ENCODE measurements at regions of chr1 and their contacts with region 1.

Region 1: DNA sequence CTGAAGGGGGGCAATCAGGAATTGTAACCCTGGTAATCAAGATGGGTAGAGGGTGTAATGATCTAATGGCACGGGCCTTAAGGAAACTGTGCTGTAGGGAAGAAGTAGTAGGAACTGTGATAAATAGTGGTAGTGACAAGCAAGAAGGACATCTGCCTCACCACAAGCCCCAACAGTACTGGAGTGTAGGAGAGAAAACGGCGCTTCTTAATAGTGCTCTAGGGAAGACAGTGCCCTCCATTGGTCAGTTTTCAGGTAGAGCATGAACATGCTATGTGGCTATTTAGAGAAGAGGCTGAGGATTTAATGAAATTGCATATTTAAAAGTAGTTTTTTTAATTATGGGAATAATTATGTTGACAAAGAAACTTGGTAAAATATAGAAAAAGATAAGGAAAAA is 32.2 kb downstream of the SLC30A7 start:
- DNase-seq: peak in 4 of 14 experiments; percentile 36 to 64 (median 53)
- ATAC-seq: no peak
- H3K4me3 ChIP-seq: peak overlapping the region; percentile 28
- H3K4me3 Mint-ChIP-seq: no peak overlapping the region
- H3K27ac ChIP-seq: peak overlapping the region; percentile 72 to 77
- H3K27ac Mint-ChIP-seq: no peak overlapping the region
- H3K4me1 ChIP-seq: peaks cover 46% of the 10 kb centered on the region
- H3K4me1 Mint-ChIP-seq: peaks cover 41% of the 10 kb centered on the region
- H3K27me3 ChIP-seq: no peaks in the 10 kb centered on the region
- H3K27me3 Mint-ChIP-seq: no peaks in the 10 kb centered on the region
- CTCF ChIP-seq: no peak

Region 2: GRCh38 chr1:100941098-100941527 is 13.0 kb after region 1 on chr1:
- CTCF ChIA-PET with region 1: interaction called, 3 read pairs
- POLR2A ChIA-PET with region 1: interaction called, 34 read pairs
- intact Hi-C with region 1: no loop called
- DNase-seq: no peak
- ATAC-seq: no peak
- H3K4me3 ChIP-seq: no peak overlapping the region
- H3K4me3 Mint-ChIP-seq: no peak overlapping the region
- H3K27ac ChIP-seq: no peak overlapping the region
- H3K27ac Mint-ChIP-seq: peak overlapping the region; percentile 90
- H3K4me1 ChIP-seq: peaks cover 11% of the 10 kb centered on the region
- H3K4me1 Mint-ChIP-seq: peaks cover 66% of the 10 kb centered on the region
- H3K27me3 ChIP-seq: no peaks in the 10 kb centered on the region
- H3K27me3 Mint-ChIP-seq: no peaks in the 10 kb centered on the region
- CTCF ChIP-seq: no peak

Region 3: DNA sequence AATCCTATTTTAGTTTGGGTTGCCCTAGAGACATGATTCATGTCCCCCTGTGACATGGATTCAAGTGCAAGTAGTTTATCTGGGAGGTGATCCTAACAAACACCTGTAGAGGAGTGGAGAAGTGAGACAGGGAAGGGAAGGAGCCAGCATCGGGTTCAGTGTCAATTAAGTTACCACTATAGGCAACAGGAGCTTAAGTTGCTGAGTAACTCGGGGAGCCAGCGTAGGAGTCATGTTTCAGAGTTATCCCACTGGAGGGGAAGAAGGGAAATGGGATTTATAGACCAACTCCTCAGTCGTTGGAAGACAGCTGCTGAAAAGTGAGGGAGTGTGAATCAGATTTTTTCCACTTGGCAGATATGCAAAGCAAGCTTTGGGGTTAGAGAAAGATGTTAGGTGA is 22.7 kb after region 1 on chr1:
- CTCF ChIA-PET with region 1: interaction called, 3 read pairs
- POLR2A ChIA-PET with region 1: interaction called, 50 read pairs
- intact Hi-C with region 1: loop called in 1 of 2 experiments (anchors 1 kb)
- DNase-seq: no peak
- ATAC-seq: no peak
- H3K4me3 ChIP-seq: no peak overlapping the region
- H3K4me3 Mint-ChIP-seq: no peak overlapping the region
- H3K27ac ChIP-seq: no peak overlapping the region
- H3K27ac Mint-ChIP-seq: peak overlapping the region; percentile 96
- H3K4me1 ChIP-seq: peaks cover 27% of the 10 kb centered on the region
- H3K4me1 Mint-ChIP-seq: peaks cover 81% of the 10 kb centered on the region
- H3K27me3 ChIP-seq: no peaks in the 10 kb centered on the region
- H3K27me3 Mint-ChIP-seq: no peaks in the 10 kb centered on the region
- CTCF ChIP-seq: no peak

Region 4: DNA sequence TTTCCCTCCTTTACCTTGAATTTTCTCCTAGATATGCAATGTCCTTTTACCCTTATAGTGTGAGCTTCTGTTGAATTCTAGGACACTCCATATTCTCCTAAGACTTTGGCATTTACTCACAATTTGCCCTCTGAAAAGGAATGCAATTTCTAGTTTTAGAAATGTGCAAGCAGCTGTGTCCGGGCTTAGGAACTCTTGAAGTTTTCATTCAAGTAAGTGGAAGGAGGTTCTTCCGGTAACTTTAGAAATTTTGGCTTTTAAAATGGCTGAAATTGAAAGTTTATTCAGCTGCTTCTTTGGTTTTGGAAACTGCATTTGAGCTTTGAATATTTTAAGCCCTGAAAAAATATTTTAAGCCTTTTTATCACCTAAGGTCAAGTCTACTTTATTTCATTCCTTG is 41.2 kb after region 1 on chr1:
- CTCF ChIA-PET with region 1: no interaction called
- POLR2A ChIA-PET with region 1: interaction called, 6 read pairs
- intact Hi-C with region 1: loop called in 1 of 2 experiments (anchors 5 kb)
- DNase-seq: no peak
- ATAC-seq: no peak
- H3K4me3 ChIP-seq: no peak overlapping the region
- H3K4me3 Mint-ChIP-seq: no peak overlapping the region
- H3K27ac ChIP-seq: no peak overlapping the region
- H3K27ac Mint-ChIP-seq: peak overlapping the region; percentile 39
- H3K4me1 ChIP-seq: no peaks in the 10 kb centered on the region
- H3K4me1 Mint-ChIP-seq: peaks cover 53% of the 10 kb centered on the region
- H3K27me3 ChIP-seq: no peaks in the 10 kb centered on the region
- H3K27me3 Mint-ChIP-seq: no peaks in the 10 kb centered on the region
- CTCF ChIP-seq: no peak

Region 5: GRCh38 chr1:100995198-100995988 is 67.3 kb after region 1 on chr1:
- CTCF ChIA-PET with region 1: no interaction called
- POLR2A ChIA-PET with region 1: interaction called, 5 read pairs
- intact Hi-C with region 1: loop called in 1 of 2 experiments (anchors 5 kb)
- DNase-seq: peak in 1 of 14 experiments; percentile 22
- ATAC-seq: peak; percentile 43
- H3K4me3 ChIP-seq: no peak overlapping the region
- H3K4me3 Mint-ChIP-seq: peak overlapping the region; percentile 3
- H3K27ac ChIP-seq: no peak overlapping the region
- H3K27ac Mint-ChIP-seq: peak overlapping the region; percentile 75
- H3K4me1 ChIP-seq: no peaks in the 10 kb centered on the region
- H3K4me1 Mint-ChIP-seq: peaks cover 46% of the 10 kb centered on the region
- H3K27me3 ChIP-seq: no peaks in the 10 kb centered on the region
- H3K27me3 Mint-ChIP-seq: no peaks in the 10 kb centered on the region
- CTCF ChIP-seq: no peak

Region 6: DNA sequence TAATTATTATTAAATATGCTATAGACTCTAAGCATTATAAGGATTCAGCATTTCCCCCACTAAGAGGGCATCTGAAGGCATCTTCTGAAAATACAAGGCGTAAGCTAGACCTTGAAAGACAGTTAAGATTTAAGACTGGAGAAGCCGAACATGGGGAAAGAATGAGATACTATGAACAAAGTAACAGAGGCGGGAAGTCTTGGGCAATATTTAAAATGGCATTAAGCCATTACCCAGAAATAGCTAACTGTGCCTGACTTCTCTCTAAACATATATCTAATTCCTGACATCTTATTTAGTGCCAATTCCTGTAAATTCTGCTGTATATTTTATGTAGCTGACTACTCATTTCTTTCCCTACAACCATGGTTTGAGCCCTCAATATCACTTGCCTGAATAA is 76.5 kb after region 1 on chr1:
- CTCF ChIA-PET with region 1: no interaction called
- POLR2A ChIA-PET with region 1: interaction called, 3 read pairs
- intact Hi-C with region 1: loop called (anchors 5 kb)
- DNase-seq: no peak
- ATAC-seq: no peak
- H3K4me3 ChIP-seq: no peak overlapping the region
- H3K4me3 Mint-ChIP-seq: no peak overlapping the region
- H3K27ac ChIP-seq: no peak overlapping the region
- H3K27ac Mint-ChIP-seq: peak overlapping the region; percentile 57
- H3K4me1 ChIP-seq: peaks cover 17% of the 10 kb centered on the region
- H3K4me1 Mint-ChIP-seq: peaks cover 84% of the 10 kb centered on the region
- H3K27me3 ChIP-seq: no peaks in the 10 kb centered on the region
- H3K27me3 Mint-ChIP-seq: no peaks in the 10 kb centered on the region
- CTCF ChIP-seq: no peak

Region 7: GRCh38 chr1:101025657-101026504 is 97.8 kb after region 1 on chr1 and contains the start of gene DPH5:
- CTCF ChIA-PET with region 1: no interaction called
- POLR2A ChIA-PET with region 1: interaction called, 6 read pairs
- intact Hi-C with region 1: loop called (anchors 2 to 5 kb)
- DNase-seq: peak; percentile 77 to 91 (median 84)
- ATAC-seq: peak; percentile 94
- H3K4me3 ChIP-seq: peak within 1 kb of the TSS; percentile 77
- H3K4me3 Mint-ChIP-seq: peak within 1 kb of the TSS; percentile 97
- H3K27ac ChIP-seq: peak within 1 kb of the TSS; percentile 63 to 75
- H3K27ac Mint-ChIP-seq: peak within 1 kb of the TSS; percentile 98
- H3K4me1 ChIP-seq: peaks cover 19% of the 10 kb centered on the region
- H3K4me1 Mint-ChIP-seq: peaks cover 91% of the 10 kb centered on the region
- H3K27me3 ChIP-seq: no peaks in the 10 kb centered on the region
- H3K27me3 Mint-ChIP-seq: no peaks in the 10 kb centered on the region
- CTCF ChIP-seq: no peak
- total RNA-seq, gene DPH5: 31.3 to 35.4 TPM